GM12878 (cell line): ENCODE measurements at regions of chr14 and their contacts with region 1.

Region 1: GRCh38 chr14:49867831-49868723 is 15.5 kb upstream of the NEMF start:
- DNase-seq: peak; percentile 92
- ATAC-seq: peak; percentile 89
- H3K4me3 ChIP-seq: peak overlapping the region; percentile 89
- H3K27ac ChIP-seq: peak overlapping the region; percentile 93
- H3K4me1 ChIP-seq: peaks cover 20% of the 10 kb centered on the region
- H3K27me3 ChIP-seq: no peaks in the 10 kb centered on the region
- CTCF ChIP-seq: no peak
- EP300 ChIP-seq: no peak
- POLR2A ChIP-seq: peak; percentile 83
- RAD21 ChIP-seq: no peak

Region 2: GRCh38 chr14:49892636-49893308 is 24.7 kb after region 1 on chr14 and contains the start of gene ARF6:
- CTCF ChIA-PET with region 1: interaction called, 19 read pairs
- POLR2A ChIA-PET with region 1: interaction called, 36 read pairs
- RAD21 ChIA-PET with region 1: interaction called, 21 read pairs
- SMC1A ChIA-PET with region 1: interaction called, 11 read pairs
- in situ Hi-C with region 1: no loop called
- intact Hi-C with region 1: loop called (anchors 1 kb)
- DNase-seq: peak; percentile 81
- ATAC-seq: peak; percentile 83
- H3K4me3 ChIP-seq: peak within 1 kb of the TSS; percentile 97
- H3K27ac ChIP-seq: peak within 1 kb of the TSS; percentile 100
- H3K4me1 ChIP-seq: peaks cover 5% of the 10 kb centered on the region
- H3K27me3 ChIP-seq: no peaks in the 10 kb centered on the region
- CTCF ChIP-seq: peak in 2 of 3 experiments; percentile 15 to 29; a peak in 1 of 6 replicates
- EP300 ChIP-seq: no peak
- POLR2A ChIP-seq: peak; percentile 92
- RAD21 ChIP-seq: 0 out of 2 replicates have a peak, but pooled peaks have one; percentile 10
- polyA plus RNA-seq, gene ARF6: 46.8 to 86.6 TPM

Region 3: GRCh38 chr14:50060871-50061663 is 193.0 kb after region 1 on chr14:
- CTCF ChIA-PET with region 1: interaction called, 92 read pairs
- POLR2A ChIA-PET with region 1: interaction called, 22 read pairs
- RAD21 ChIA-PET with region 1: interaction called, 50 read pairs
- SMC1A ChIA-PET with region 1: interaction called, 27 read pairs
- in situ Hi-C with region 1: no loop called
- intact Hi-C with region 1: loop called (anchors 5 kb)
- DNase-seq: no peak
- ATAC-seq: peak; percentile 51
- H3K4me3 ChIP-seq: 0 out of 2 replicates have a peak overlapping the region, but pooled peaks have one; percentile 25
- H3K27ac ChIP-seq: peak overlapping the region; percentile 98
- H3K4me1 ChIP-seq: peaks cover 53% of the 10 kb centered on the region
- H3K27me3 ChIP-seq: no peaks in the 10 kb centered on the region
- CTCF ChIP-seq: no peak
- EP300 ChIP-seq: peak in 1 of 2 experiments; percentile 66; a peak in 2 of 4 replicates
- POLR2A ChIP-seq: no peak
- RAD21 ChIP-seq: peak; percentile 32; the same call in 1 of the 2 replicates

Region 4: DNA sequence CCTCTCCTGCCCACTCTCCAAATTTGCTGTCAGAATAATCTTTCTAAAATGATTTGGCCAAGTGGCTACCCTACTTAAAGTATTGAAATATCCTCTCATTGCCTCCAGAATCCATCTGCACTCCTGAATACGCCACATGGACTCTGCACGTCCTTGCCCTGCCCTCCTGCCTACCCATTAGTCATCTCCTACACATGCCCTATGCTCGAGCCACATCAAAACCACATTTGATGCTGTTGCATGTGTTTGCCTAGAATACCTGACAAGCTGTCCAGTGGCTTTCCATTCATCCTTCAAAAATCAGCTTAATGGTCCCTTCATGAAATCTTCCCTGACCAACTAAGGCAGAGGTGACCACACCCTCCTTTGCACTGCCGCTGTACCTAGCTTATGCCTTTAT is 231.3 kb after region 1 on chr14:
- CTCF ChIA-PET with region 1: interaction called, 243 read pairs
- POLR2A ChIA-PET with region 1: interaction called, 12 read pairs
- RAD21 ChIA-PET with region 1: interaction called, 26 read pairs
- SMC1A ChIA-PET with region 1: interaction called, 68 read pairs
- in situ Hi-C with region 1: loop called (anchors 10 kb)
- intact Hi-C with region 1: no loop called
- DNase-seq: no peak
- ATAC-seq: no peak
- H3K4me3 ChIP-seq: no peak overlapping the region
- H3K27ac ChIP-seq: no peak overlapping the region
- H3K4me1 ChIP-seq: peaks cover 12% of the 10 kb centered on the region
- H3K27me3 ChIP-seq: no peaks in the 10 kb centered on the region
- CTCF ChIP-seq: no peak
- EP300 ChIP-seq: no peak
- POLR2A ChIP-seq: no peak
- RAD21 ChIP-seq: no peak